Mammary epithelial cell (primary cell): ENCODE measurements at regions of chr16 and their contacts with region 1.

Region 1: DNA sequence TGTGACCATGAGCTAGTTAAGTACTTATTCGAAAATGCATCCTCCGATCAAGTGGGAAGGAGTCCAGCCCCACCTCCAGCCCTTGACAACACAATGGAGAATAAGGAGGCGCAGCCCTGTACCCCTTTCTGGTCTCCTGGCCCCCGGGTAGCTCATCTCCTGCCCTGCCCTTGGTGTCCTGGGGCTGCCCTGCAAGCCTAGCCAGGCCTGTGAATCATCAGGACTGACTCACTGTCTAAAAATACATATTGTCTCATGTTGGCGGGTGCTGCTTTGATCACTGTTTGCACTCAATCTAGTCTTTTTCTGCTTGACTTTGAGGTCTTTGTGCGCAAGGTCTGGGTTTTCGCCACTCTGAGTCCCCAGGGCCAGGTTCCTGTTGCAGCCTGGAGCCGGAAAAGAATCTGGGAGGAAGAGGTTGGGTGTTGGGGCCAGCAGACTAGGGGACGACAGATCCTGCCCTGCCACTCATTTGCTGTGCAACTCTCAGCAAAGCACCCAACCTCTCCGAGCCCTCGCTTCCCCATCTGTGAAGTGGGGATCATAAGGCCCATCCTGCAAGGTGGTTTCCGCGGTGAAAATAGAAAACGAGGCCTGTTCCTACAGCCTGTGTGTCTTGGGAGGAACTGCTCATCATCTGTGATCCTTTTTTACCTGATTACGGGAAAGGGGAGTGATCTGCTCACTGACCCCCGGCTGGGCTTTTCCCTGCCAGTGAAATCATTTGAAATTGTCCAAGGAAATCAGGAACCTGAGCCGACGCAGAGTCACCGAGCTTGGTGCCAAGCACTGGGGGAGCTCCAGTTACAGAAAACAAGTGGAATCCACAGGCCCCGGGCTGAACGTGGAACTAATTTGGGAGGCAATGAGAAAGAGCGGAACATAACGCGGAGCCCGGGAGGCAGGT is 230.4 kb downstream of the PARN start:
- DNase-seq: peak; percentile 68
- H3K4me3 ChIP-seq: no peak overlapping the region
- H3K27ac ChIP-seq: peak overlapping the region; percentile 21
- H3K4me1 ChIP-seq: peaks cover 25% of the 10 kb centered on the region
- H3K27me3 ChIP-seq: no peaks in the 10 kb centered on the region
- CTCF ChIP-seq: no peak

Region 2: GRCh38 chr16:14310519-14310991 is 89.1 kb before region 1 on chr16:
- CTCF ChIA-PET with region 1: no interaction called
- dilution Hi-C with region 1: no loop called
- in situ Hi-C with region 1: no loop called
- intact Hi-C with region 1: loop called (anchors 2 kb)
- DNase-seq: no peak
- H3K4me3 ChIP-seq: no peak overlapping the region
- H3K27ac ChIP-seq: peak overlapping the region; percentile 95
- H3K4me1 ChIP-seq: peaks cover 53% of the 10 kb centered on the region
- H3K27me3 ChIP-seq: no peaks in the 10 kb centered on the region
- CTCF ChIP-seq: peak in 1 of 2 donors; percentile 4

Region 3: DNA sequence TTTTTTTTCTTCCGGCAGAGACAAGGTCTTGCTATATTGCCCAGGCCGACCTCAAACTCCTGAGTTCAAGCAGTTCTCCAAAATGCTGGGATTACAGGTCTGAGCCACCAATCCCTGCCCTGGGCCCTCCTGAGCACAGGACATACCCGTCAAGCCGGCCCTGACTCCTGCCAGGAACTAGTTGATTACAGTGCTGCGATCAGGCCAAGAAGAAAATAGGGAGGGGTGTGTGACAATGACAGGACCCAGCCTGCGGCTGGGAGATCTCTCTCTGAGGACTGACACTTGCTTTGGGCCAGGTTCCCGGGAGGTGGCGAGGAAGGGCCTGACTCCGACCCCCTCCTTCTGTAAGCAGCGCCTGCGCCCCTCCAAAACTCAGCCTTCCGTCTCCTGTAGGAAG is 51.9 kb before region 1 on chr16:
- CTCF ChIA-PET with region 1: interaction called, 21 read pairs
- dilution Hi-C with region 1: no loop called
- in situ Hi-C with region 1: no loop called
- intact Hi-C with region 1: no loop called
- DNase-seq: no peak
- H3K4me3 ChIP-seq: no peak overlapping the region
- H3K27ac ChIP-seq: no peak overlapping the region
- H3K4me1 ChIP-seq: no peaks in the 10 kb centered on the region
- H3K27me3 ChIP-seq: no peaks in the 10 kb centered on the region
- CTCF ChIP-seq: no peak

Region 4: DNA sequence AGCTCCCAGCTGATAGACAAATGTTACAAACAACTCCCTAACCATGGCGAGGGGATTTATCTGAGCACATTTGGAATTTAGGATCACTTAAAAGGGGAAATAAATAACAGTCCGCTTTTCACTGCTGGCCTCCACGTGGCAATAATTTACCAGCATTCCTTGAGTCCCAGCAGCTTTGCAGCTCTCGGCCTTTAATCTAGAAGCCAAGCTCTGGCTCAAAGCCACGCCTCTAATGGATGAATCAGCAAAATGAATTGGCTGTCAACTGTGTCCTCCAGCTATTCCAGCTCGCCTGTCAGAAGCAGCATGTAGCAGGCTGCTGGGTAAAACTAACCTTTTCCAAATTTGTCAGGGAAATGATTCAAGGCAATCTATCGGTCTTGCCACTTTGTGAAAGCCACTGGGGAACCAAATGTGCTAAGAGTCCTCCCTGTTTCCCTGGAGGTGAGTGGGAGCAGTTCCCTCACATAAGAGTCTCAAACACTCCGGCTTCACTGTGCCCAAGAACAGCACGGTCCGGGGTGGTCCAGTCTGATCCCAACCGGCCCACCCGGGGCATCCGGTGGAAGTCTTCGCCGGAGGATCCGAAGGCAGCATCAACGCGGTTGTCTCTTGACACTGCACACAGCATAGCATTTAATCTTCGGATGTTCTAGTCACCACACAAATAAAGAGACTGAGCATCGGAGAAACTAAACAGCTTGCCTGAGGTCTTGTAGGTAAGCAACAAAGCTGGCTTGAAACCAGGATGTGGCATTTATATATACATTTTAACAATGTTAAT is 87.1 kb after region 1 on chr16:
- CTCF ChIA-PET with region 1: no interaction called
- dilution Hi-C with region 1: no loop called
- in situ Hi-C with region 1: no loop called
- intact Hi-C with region 1: no loop called
- DNase-seq: peak; percentile 87
- H3K4me3 ChIP-seq: peak overlapping the region; percentile 16 to 39 (median 22)
- H3K27ac ChIP-seq: peak overlapping the region; percentile 50
- H3K4me1 ChIP-seq: peaks cover 17% of the 10 kb centered on the region
- H3K27me3 ChIP-seq: no peaks in the 10 kb centered on the region
- CTCF ChIP-seq: no peak